H1 (cell line): ENCODE measurements at regions of chr2 and their contacts with region 1.

Region 1: DNA sequence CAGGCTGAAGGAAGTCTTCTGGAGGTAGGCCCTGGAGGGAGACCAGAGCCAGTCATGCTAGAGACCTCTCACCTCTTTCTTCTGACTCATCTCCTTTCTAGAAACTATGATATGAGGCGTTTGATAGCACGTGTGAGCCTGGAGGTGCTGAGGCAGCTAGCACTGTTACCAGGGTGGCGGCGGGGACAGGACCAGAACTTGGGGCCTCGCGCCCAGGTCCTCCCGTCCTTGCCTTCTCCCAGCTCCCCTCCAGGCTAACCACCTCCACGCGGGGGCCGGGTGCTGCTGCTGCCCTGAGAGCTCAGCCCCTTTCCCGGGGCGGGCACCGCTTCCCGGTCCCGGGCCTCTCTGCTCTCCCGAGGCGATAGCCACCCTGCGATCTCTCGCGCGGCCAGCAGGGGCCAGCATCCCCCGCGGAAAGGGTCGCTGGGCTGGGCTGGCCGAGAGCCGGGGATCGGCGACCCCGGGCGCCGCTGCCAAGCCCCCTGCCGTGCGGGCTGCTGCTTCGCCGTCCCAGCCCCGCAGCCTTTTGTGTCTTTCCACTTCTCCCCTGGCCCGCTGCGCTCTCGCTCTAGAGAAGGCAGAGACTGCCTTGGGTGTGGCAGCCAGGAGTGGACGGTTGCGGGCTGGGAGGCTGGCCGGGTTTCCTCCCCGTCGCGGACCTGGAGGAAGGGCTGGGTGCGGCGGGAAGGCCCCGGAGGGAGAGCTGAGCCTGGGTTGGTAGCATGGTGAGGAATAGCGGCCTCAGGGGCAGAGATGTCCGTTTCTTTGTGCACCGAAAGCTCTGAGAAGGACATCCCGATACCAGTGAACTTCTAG is 49.1 kb downstream of the TMEM17 start:
- DNase-seq: peak; percentile 44 to 99
- H3K4me3 ChIP-seq: peak overlapping the region; percentile 22 to 61 (median 46)
- H3K27ac ChIP-seq: no peak overlapping the region
- H3K4me1 ChIP-seq: peaks cover 5 to 9% (median 7%) of the 10 kb centered on the region in 4 experiments
- H3K27me3 ChIP-seq: peaks cover 0 to 6% (median 0%) of the 10 kb centered on the region in 4 experiments; a peak in 3 of 7 replicates
- CTCF ChIP-seq: peak; percentile 80 to 91 (median 90)
- EP300 ChIP-seq: no peak
- POLR2A ChIP-seq: peak in 1 of 2 experiments; percentile 37; a peak in 1 of 3 replicates
- RAD21 ChIP-seq: peak; percentile 99

Region 2: DNA sequence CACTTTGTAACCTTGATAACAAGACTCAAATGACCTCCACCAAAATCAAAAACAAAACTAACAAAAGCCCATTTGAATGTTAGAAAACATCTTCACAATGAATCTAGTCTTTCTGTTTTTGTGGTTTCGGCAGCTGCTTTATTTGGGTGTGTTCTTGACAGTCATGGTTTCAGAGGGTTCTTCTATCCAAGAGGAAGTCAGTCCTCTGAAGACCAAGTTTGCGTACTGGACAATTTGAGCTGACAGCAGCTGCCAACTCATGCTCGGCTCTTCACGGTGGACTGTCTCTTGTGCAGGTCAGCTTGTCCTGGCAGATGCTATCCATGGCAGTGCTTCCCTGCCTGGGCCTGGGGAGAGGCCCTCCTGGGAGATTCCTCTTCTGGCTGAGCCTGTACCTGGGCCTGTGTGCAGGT is 41.9 kb before region 1 on chr2:
- CTCF ChIA-PET with region 1: no interaction called
- POLR2A ChIA-PET with region 1: no interaction called
- DNase-seq: no peak
- H3K4me3 ChIP-seq: no peak overlapping the region
- H3K27ac ChIP-seq: no peak overlapping the region
- H3K4me1 ChIP-seq: peaks cover 7 to 10% (median 8%) of the 10 kb centered on the region in 4 experiments; a peak in 6 of 7 replicates
- H3K27me3 ChIP-seq: no peaks in the 10 kb centered on the region
- CTCF ChIP-seq: no peak
- EP300 ChIP-seq: no peak
- POLR2A ChIP-seq: no peak
- RAD21 ChIP-seq: no peak

Region 3: DNA sequence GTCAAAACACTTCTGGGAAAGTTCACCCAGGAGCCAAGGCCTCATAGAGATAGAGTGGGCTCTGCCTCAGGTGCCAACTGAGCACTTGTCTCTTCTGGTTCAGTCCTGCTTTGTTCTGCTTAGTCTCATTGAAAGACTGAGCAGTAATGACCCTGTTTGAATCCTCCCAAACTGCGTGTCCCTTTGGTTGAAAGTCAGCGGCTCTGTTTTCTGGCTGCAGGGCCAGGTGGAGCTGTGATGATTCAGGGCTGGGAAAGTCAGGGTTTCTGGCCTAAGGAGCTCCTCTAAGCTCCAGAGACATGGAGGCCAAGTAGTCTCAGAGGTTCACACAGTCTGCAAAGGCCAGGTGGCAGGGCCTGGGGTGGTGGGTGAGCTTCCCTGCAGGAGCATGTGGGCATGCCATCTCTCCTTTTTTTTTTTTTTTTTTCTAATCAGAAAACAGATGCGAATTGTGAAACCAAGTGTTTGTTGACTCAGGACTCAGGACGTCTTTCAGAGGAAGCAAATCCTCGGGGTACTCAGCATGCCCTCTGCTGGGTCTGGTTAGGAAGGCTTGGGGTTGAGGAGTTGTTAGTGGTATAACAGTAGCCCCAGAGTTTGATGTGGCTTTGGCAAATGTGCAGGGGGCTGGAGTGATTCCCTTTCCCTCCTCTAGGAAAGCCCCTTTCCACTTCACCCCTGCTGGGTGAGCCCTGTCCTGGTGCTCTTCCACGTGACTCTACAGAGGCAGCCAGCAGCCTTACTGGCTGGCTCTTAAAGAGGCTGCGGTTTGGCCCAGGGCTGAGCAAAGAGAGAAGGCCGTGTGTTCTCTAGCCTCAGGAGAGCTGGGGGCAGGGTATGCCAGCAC is 10.8 kb after region 1 on chr2:
- CTCF ChIA-PET with region 1: interaction called, 14 read pairs
- POLR2A ChIA-PET with region 1: no interaction called
- DNase-seq: no peak
- H3K4me3 ChIP-seq: 0 out of 8 replicates have a peak overlapping the region, but pooled peaks of 1 of the 4 experiments have one; percentile 2
- H3K27ac ChIP-seq: no peak overlapping the region
- H3K4me1 ChIP-seq: peaks cover 9 to 24% (median 17%) of the 10 kb centered on the region in 4 experiments
- H3K27me3 ChIP-seq: no peaks in the 10 kb centered on the region
- CTCF ChIP-seq: peak in 1 of 3 experiments; percentile 21; a peak in 1 of 4 replicates
- EP300 ChIP-seq: no peak
- POLR2A ChIP-seq: no peak
- RAD21 ChIP-seq: no peak; a peak in 1 of 4 replicates

Region 4: DNA sequence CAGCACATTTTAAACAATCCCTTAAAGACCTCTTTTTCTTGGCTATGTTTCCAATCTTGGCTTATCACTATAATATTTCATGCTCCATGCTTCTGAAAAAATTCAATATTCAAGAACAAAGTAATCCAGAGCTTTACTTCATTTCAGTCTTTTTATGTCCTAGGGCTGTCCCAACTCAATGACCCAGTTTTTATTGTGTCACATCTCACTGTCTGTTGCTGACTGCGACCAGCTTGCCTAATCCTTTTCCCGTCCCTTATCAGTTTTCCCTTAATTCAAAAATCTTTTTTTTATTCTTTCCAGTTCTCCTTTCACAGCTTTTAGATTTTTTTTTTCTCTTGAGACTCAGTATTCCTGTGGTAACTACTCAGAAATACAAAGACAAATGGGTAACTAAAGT is 38.8 kb after region 1 on chr2:
- CTCF ChIA-PET with region 1: interaction called, 11 read pairs
- POLR2A ChIA-PET with region 1: no interaction called
- DNase-seq: no peak
- H3K4me3 ChIP-seq: no peak overlapping the region
- H3K27ac ChIP-seq: no peak overlapping the region
- H3K4me1 ChIP-seq: no peaks in the 10 kb centered on the region
- H3K27me3 ChIP-seq: no peaks in the 10 kb centered on the region
- CTCF ChIP-seq: no peak
- EP300 ChIP-seq: no peak
- POLR2A ChIP-seq: no peak
- RAD21 ChIP-seq: no peak

Region 5: DNA sequence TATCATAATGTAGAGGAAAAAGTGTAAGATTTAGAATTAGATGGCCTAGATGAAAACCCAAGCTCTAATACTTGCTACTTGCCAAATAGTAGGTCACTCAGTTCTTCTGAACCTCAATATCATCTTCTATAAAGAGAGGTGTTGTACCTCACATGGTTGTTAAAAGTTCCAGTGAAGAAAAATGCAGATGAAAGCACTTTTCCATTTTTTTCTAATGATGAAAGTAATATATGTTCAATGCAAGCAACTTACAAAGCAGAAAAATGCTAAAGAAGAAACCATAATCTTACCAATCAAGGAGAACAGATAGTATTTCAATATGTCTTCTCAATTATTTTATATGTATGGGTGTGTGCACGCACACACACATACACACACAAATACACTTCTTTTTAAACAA is 101.8 kb after region 1 on chr2:
- CTCF ChIA-PET with region 1: no interaction called
- POLR2A ChIA-PET with region 1: no interaction called
- DNase-seq: no peak
- H3K4me3 ChIP-seq: no peak overlapping the region
- H3K27ac ChIP-seq: no peak overlapping the region
- H3K4me1 ChIP-seq: no peaks in the 10 kb centered on the region
- H3K27me3 ChIP-seq: no peaks in the 10 kb centered on the region
- CTCF ChIP-seq: no peak
- EP300 ChIP-seq: no peak
- POLR2A ChIP-seq: no peak
- RAD21 ChIP-seq: no peak

Region 6: DNA sequence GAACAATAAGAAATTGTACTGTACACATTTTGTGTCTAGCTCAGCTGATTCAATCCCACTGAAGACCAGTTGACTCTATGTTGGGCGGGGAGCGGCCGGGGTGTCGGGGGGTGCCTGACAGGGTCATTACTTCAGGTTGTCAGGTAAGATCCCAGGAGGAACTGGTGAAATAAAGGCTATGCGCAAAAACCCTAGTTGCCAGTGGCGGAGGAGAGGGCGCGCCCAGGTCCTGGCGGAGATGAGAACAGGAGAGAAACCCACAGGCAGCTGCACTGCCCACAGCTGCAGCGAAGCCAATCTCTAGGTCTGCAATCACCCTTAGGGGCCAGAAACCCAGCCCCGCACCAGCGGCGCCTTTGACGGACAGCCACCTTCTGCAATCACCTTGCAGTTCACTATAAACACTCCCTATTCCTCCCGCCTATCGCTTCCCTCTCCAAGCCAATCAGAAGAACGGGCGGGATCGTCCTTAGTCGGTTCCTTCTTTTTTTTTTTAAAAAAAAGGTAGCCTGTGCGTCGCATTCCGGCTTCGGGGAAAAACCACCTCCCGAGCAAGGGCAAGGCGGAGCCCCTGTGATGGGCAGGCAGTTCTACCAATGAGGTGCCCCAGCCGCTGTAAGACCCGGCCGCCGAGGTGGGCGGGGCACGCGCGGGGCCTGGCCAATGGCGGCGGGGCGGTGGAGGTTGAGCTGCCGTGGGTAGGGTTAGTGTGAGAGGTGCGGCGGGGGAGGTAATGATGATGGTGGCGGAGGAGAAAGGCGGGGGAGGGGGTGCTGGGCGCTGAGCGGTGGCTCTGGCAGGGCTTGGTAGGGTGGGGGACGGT is 248.3 kb after region 1 on chr2 and contains the start of gene EHBP1:
- CTCF ChIA-PET with region 1: interaction called, 10 read pairs
- POLR2A ChIA-PET with region 1: no interaction called
- DNase-seq: peak; percentile 97 to 99
- H3K4me3 ChIP-seq: peak within 1 kb of the TSS; percentile 72 to 91 (median 80)
- H3K27ac ChIP-seq: no peak within 1 kb of the TSS
- H3K4me1 ChIP-seq: peaks cover 4 to 12% (median 7%) of the 10 kb centered on the region in 4 experiments; a peak in 6 of 7 replicates
- H3K27me3 ChIP-seq: no peaks in the 10 kb centered on the region
- CTCF ChIP-seq: no peak
- EP300 ChIP-seq: no peak
- POLR2A ChIP-seq: peak in 1 of 2 experiments; percentile 84; a peak in 2 of 3 replicates
- RAD21 ChIP-seq: no peak; a peak in 1 of 4 replicates
- total RNA-seq, gene EHBP1: 59.6 and 64.1 TPM in 2 replicates

Region 7: GRCh38 chr2:62774555-62775366 is 317.8 kb after region 1 on chr2:
- CTCF ChIA-PET with region 1: interaction called, 134 read pairs
- POLR2A ChIA-PET with region 1: interaction called, 4 read pairs
- DNase-seq: no peak
- H3K4me3 ChIP-seq: no peak overlapping the region
- H3K27ac ChIP-seq: no peak overlapping the region
- H3K4me1 ChIP-seq: peaks cover 0 to 4% (median 2%) of the 10 kb centered on the region in 4 experiments; a peak in 1 of 7 replicates
- H3K27me3 ChIP-seq: no peaks in the 10 kb centered on the region
- CTCF ChIP-seq: peak in 2 of 3 experiments; percentile 18 to 53; a peak in 2 of 4 replicates
- EP300 ChIP-seq: no peak
- POLR2A ChIP-seq: no peak
- RAD21 ChIP-seq: peak; percentile 67 to 83